Breast epithelium (tissue), 4 donors: ENCODE measurements at regions of chr3 and their contacts with region 1.

Region 1: GRCh38 chr3:194691481-194692283 is 6.0 kb downstream of the FAM43A start:
- DNase-seq: no peak
- H3K4me3 ChIP-seq: no peak overlapping the region
- H3K27ac ChIP-seq: peak overlapping the region in 1 of 2 donors; percentile 32
- H3K4me1 ChIP-seq: no peaks in the 10 kb centered on the region
- H3K27me3 ChIP-seq: no peaks in the 10 kb centered on the region
- CTCF ChIP-seq: no peak
- POLR2A ChIP-seq: no peak

Region 2: GRCh38 chr3:194731506-194732075 is 39.9 kb after region 1 on chr3:
- intact Hi-C with region 1: loop called (anchors 1 kb)
- DNase-seq: no peak
- H3K4me3 ChIP-seq: no peak overlapping the region
- H3K27ac ChIP-seq: no peak overlapping the region
- H3K4me1 ChIP-seq: no peaks in the 10 kb centered on the region
- H3K27me3 ChIP-seq: no peaks in the 10 kb centered on the region
- CTCF ChIP-seq: no peak
- POLR2A ChIP-seq: no peak